Common myeloid progenitor, CD34-positive (primary cell): ENCODE measurements at regions of chr19 and their contacts with region 1.

Region 1: DNA sequence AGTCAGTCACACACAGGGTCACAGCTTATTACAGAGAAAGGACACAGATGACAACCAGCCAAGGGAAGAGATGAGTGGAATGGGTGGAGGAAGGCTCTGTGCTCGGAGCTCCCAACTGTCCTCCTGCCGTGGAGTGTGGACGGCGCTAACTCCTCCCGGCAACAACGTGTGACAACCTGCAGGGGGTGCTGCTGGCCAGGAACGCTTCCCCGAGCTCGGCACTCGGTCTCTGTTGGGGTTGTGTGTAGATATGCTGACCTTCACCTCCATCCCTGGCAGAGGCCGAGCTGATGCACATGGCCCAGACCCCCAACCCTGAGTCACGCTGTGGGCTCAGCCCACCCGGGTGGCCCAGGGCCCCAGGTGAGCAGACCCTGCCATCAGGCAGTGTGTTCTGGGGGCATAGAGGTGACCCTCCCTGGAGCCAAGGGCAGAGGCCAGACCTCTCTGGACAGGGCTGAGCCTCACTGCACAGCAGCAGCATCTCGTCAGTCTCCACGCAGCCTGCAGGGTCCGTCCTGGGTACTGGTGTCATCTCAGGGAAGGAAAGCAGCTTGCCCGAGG is 14.1 kb downstream of the ZNF444 start:
- DNase-seq: peak in 2 of 3 donors; percentile 25 to 32
- H3K4me3 ChIP-seq: no peak overlapping the region
- H3K27ac ChIP-seq: no peak overlapping the region
- H3K4me1 ChIP-seq: peaks cover 0 to 13% (median 7%) of the 10 kb centered on the region in 4 experiments
- H3K27me3 ChIP-seq: no peaks in the 10 kb centered on the region

Region 2: DNA sequence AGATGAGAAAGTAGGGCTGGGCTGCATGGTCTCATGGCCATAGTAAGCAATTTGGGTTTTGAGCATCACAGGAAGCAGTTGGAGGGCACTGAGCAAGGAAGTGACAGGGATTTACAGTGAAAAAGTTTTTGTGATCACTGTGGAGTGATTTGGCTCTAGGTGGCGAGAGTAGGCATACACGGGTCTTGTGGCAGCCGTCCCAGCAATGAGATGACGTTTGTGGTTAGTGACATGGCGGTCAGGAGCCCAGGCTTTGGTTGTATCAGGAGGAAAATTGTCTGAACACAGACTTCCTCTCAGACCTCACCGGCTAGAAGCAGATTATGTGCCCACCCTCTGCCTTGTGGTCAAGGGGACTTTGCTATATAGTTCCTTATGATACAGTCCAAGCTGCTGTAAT is 10.8 kb before region 1 on chr19:
- CTCF ChIA-PET with region 1: interaction called, 18 read pairs
- POLR2A ChIA-PET with region 1: no interaction called
- DNase-seq: peak; percentile 87 to 94 (median 92)
- H3K4me3 ChIP-seq: peak overlapping the region in 2 of 7 experiments; percentile 8 to 25
- H3K27ac ChIP-seq: no peak overlapping the region
- H3K4me1 ChIP-seq: peaks cover 8 to 53% (median 43%) of the 10 kb centered on the region in 4 experiments
- H3K27me3 ChIP-seq: no peaks in the 10 kb centered on the region

Region 3: DNA sequence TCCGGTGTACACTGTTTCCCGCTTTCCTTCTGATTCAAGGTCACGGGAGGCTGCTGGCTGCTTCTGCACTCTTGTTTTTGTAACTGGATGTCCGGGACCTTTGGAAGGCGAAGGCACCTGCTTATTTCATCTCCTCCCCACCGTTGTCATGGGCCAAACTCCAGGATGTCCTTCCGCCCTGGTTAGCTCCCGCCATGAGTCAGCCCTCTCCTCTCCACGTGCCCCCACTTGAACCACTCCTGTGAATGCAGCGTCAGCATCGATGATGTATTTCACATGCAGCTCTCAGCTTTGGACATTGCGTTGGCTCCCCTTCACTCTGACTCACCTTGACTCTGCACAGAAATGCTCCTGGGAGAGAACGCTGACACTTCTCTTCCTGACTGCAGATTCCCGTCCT is 15.1 kb after region 1 on chr19:
- CTCF ChIA-PET with region 1: interaction called, 33 read pairs
- POLR2A ChIA-PET with region 1: interaction called, 3 read pairs
- DNase-seq: no peak
- H3K4me3 ChIP-seq: no peak overlapping the region
- H3K27ac ChIP-seq: no peak overlapping the region
- H3K4me1 ChIP-seq: peaks cover 0 to 6% (median 3%) of the 10 kb centered on the region in 4 experiments
- H3K27me3 ChIP-seq: peaks cover 0 to 18% (median 2%) of the 10 kb centered on the region in 5 experiments